Vagina (tissue), 2 donors: ENCODE measurements at regions of chr1 and their contacts with region 1.

Region 1: DNA sequence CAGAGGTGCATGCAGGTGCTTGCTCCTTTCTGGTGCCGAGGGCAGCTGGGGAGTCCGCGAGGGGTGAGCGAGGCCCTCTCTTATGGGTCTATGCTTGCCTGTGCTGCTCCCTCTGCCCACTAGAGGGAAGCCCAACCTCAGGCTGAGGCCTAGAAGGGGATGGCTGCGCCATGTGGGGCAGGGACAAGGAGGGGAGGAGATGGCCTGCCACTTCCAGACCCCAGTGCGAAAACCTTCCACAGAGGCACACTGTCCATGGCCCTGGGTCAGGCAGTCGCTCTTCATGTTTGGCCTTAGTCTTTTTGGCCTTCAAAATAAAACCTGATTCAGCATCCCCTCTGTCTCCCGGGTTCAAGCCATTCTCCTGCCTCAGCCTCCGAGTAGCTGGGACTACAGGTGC is 14.0 kb downstream of the RHBG start:
- DNase-seq: no peak
- H3K4me3 ChIP-seq: no peak overlapping the region
- H3K27ac ChIP-seq: no peak overlapping the region
- H3K4me1 ChIP-seq: no peaks in the 10 kb centered on the region
- H3K27me3 ChIP-seq: no peaks in the 10 kb centered on the region
- CTCF ChIP-seq: peak; percentile 8 to 45 (median 23)
- POLR2A ChIP-seq: no peak

Region 2: GRCh38 chr1:156319664-156320063 is 63.4 kb before region 1 on chr1:
- intact Hi-C with region 1: no loop called
- DNase-seq: no peak
- H3K4me3 ChIP-seq: no peak overlapping the region
- H3K27ac ChIP-seq: no peak overlapping the region
- H3K4me1 ChIP-seq: no peaks in the 10 kb centered on the region
- H3K27me3 ChIP-seq: no peaks in the 10 kb centered on the region
- CTCF ChIP-seq: peak in 1 of 3 experiments; percentile 22
- POLR2A ChIP-seq: no peak

Region 3: GRCh38 chr1:156435545-156436141 is 52.6 kb after region 1 on chr1:
- intact Hi-C with region 1: loop called (anchors 5 kb)
- DNase-seq: no peak
- H3K4me3 ChIP-seq: peak overlapping the region; percentile 15 to 49
- H3K27ac ChIP-seq: no peak overlapping the region
- H3K4me1 ChIP-seq: peaks cover 14% of the 10 kb centered on the region
- H3K27me3 ChIP-seq: peaks cover 28% of the 10 kb centered on the region
- CTCF ChIP-seq: no peak
- POLR2A ChIP-seq: no peak

Region 4: DNA sequence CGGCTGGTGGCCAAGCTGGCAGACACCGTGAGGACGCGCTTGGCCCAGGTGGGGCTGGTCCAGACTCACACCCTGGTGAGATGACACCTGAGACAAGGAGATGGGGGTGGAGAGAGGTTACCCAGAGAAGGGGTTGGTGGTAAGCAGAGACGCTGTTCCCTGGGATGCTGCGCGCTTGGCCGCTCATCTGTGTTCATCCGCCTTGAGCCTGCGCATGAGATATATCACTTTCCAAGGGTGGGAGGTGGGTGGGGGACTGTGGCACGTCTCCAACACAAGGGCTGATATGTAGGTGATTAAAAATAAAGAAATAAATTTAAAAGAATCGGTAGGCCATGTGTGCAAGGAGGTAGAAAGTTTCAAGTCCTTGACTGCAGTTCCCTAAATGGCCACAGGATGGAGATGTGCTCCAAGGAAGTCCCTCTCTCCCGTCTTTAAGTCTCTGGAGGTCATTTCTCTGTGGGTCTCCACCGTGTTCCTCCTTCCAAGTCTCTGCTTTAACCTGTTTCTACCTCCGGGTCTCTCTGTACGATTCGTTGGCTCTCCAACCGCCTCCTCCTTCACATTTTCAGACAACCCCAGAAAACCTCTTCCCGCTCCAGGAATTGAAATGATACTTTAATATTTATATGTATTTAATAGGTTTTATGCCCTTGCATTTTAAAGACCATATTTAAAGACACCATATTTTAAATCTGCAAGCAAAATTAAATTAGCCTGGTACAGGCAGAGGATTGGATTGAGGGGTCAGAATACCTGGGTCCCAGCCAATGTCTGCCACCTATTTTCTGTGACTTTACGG is 201.0 kb after region 1 on chr1:
- intact Hi-C with region 1: loop called (anchors 10 kb)
- DNase-seq: no peak
- H3K4me3 ChIP-seq: no peak overlapping the region
- H3K27ac ChIP-seq: no peak overlapping the region
- H3K4me1 ChIP-seq: no peaks in the 10 kb centered on the region
- H3K27me3 ChIP-seq: no peaks in the 10 kb centered on the region
- CTCF ChIP-seq: peak; percentile 84 to 92 (median 90)
- POLR2A ChIP-seq: no peak